Activated B cell treated with CpG ODN at 0.5 μM for 24 hours (primary cell): ENCODE measurements at regions of chr17 and their contacts with region 1.

Region 1: GRCh38 chr17:50478391-50479381 is at the start of gene RSAD1:
- DNase-seq: peak; percentile 84
- ATAC-seq: peak; percentile 95
- H3K4me3 Mint-ChIP-seq: peak within 1 kb of the TSS; percentile 86
- H3K27ac Mint-ChIP-seq: peak within 1 kb of the TSS; percentile 90
- H3K4me1 Mint-ChIP-seq: peaks cover 19% of the 10 kb centered on the region
- H3K27me3 Mint-ChIP-seq: peaks cover 3% of the 10 kb centered on the region
- CTCF ChIP-seq: no peak
- total RNA-seq, gene RSAD1: 36.2 and 42.2 TPM in 2 replicates

Region 2: GRCh38 chr17:50361561-50362480 is 116.9 kb before region 1 on chr17:
- CTCF ChIA-PET with region 1: interaction called, 29 read pairs
- POLR2A ChIA-PET with region 1: interaction called, 9 read pairs
- intact Hi-C with region 1: loop called (anchors 1 kb)
- DNase-seq: no peak
- ATAC-seq: peak; percentile 97
- H3K4me3 Mint-ChIP-seq: no peak overlapping the region
- H3K27ac Mint-ChIP-seq: peak overlapping the region; percentile 70
- H3K4me1 Mint-ChIP-seq: peaks cover 7% of the 10 kb centered on the region
- H3K27me3 Mint-ChIP-seq: no peaks in the 10 kb centered on the region
- CTCF ChIP-seq: peak; percentile 30

Region 3: GRCh38 chr17:50425682-50426471 is 52.8 kb before region 1 on chr17 and contains the start of gene ACSF2:
- CTCF ChIA-PET with region 1: interaction called, 4 read pairs
- POLR2A ChIA-PET with region 1: interaction called, 5 read pairs
- intact Hi-C with region 1: loop called (anchors 1 kb)
- DNase-seq: peak; percentile 65
- ATAC-seq: peak; percentile 82
- H3K4me3 Mint-ChIP-seq: peak within 1 kb of the TSS; percentile 88
- H3K27ac Mint-ChIP-seq: peak within 1 kb of the TSS; percentile 83
- H3K4me1 Mint-ChIP-seq: peaks cover 44% of the 10 kb centered on the region
- H3K27me3 Mint-ChIP-seq: no peaks in the 10 kb centered on the region
- CTCF ChIP-seq: no peak
- total RNA-seq, gene ACSF2: 16.4 and 17.9 TPM in 2 replicates

Region 4: GRCh38 chr17:50507871-50508572 is 29.3 kb after region 1 on chr17 and contains the start of gene MYCBPAP:
- CTCF ChIA-PET with region 1: no interaction called
- POLR2A ChIA-PET with region 1: no interaction called
- intact Hi-C with region 1: loop called (anchors 1 kb)
- DNase-seq: peak; percentile 77
- ATAC-seq: peak; percentile 82
- H3K4me3 Mint-ChIP-seq: peak within 1 kb of the TSS; percentile 89
- H3K27ac Mint-ChIP-seq: peak within 1 kb of the TSS; percentile 86
- H3K4me1 Mint-ChIP-seq: peaks cover 31% of the 10 kb centered on the region
- H3K27me3 Mint-ChIP-seq: no peaks in the 10 kb centered on the region
- CTCF ChIP-seq: no peak
- total RNA-seq, gene MYCBPAP: 2.1 and 2.3 TPM in 2 replicates

Region 5: GRCh38 chr17:50560185-50560824 is 81.6 kb after region 1 on chr17 and contains the start of gene CACNA1G:
- CTCF ChIA-PET with region 1: no interaction called
- POLR2A ChIA-PET with region 1: no interaction called
- intact Hi-C with region 1: loop called (anchors 2 kb)
- DNase-seq: peak; percentile 86
- ATAC-seq: peak; percentile 90
- H3K4me3 Mint-ChIP-seq: peak within 1 kb of the TSS; percentile 84
- H3K27ac Mint-ChIP-seq: no peak within 1 kb of the TSS
- H3K4me1 Mint-ChIP-seq: peaks cover 29% of the 10 kb centered on the region
- H3K27me3 Mint-ChIP-seq: peaks cover 37% of the 10 kb centered on the region
- CTCF ChIP-seq: no peak
- total RNA-seq, gene CACNA1G: 0.07 TPM in 1 of 2 replicates, not detected in the other

Region 6: GRCh38 chr17:50707289-50708049 is 228.8 kb after region 1 on chr17 and contains the start of gene ANKRD40:
- CTCF ChIA-PET with region 1: no interaction called
- POLR2A ChIA-PET with region 1: no interaction called
- intact Hi-C with region 1: loop called (anchors 2 kb)
- DNase-seq: peak; percentile 91
- ATAC-seq: peak; percentile 82
- H3K4me3 Mint-ChIP-seq: peak within 1 kb of the TSS; percentile 95
- H3K27ac Mint-ChIP-seq: peak within 1 kb of the TSS; percentile 96
- H3K4me1 Mint-ChIP-seq: peaks cover 38% of the 10 kb centered on the region
- H3K27me3 Mint-ChIP-seq: no peaks in the 10 kb centered on the region
- CTCF ChIP-seq: no peak
- total RNA-seq, gene ANKRD40: 39.0 and 40.3 TPM in 2 replicates